ENCODE measurements at regions of chr16 and their contacts with region 1.

Region 1: DNA sequence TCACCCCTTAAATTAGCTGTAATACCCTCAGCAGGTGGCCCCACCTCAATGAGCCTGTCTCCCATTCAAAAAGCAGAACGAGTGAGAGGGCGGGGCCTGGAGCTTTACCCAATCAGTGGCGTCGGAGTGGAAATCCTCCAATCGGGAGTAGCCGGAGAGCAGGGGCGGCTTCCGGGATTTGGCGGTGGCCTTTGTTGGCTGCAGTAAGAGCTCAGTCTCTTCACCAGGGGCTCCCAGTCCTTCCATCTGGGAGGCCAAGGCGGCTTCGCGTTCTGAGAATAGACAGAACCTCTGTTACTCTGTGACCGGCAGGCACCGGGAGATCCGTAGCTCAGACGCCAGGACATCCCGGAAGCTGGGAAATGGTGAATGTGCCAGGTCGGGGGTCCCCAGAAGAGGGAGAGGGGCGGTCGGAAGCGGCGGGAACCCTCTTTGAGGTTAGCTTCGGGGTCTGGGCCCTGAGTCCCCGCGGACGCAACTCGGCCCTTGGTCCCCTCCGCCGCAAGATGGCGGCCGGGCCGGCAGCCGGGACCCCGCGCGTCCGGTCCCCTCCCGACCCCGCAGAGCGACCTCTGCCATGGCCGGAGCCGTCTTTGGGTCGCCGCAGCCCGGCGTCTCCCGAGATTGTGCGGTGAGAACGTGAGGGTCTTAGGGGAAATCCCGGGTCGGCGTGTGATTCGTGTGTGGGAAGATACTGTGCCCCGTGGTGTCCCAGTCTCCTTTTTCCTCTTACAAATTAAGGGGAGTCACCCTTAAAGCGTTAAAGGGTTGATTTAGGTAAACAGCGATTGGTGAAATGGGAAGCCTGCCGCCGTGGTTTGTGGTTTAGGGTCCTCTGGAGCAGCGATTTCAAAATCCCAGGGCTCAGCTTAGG is 160.3 kb upstream of the ZNF267 start:
- DNase-seq: peak; percentile 87
- ATAC-seq: peak; percentile 91
- H3K4me3 ChIP-seq: peak overlapping the region; percentile 89 to 93
- H3K27ac ChIP-seq: peak overlapping the region; percentile 94
- H3K4me1 ChIP-seq: peaks cover 6 to 17% of the 10 kb centered on the region in 2 experiments; a peak in 3 of 4 replicates
- H3K27me3 ChIP-seq: no peaks in the 10 kb centered on the region
- CTCF ChIP-seq: no peak
- POLR2A ChIP-seq: peak; percentile 95
- RAD21 ChIP-seq: no peak

Region 2: DNA sequence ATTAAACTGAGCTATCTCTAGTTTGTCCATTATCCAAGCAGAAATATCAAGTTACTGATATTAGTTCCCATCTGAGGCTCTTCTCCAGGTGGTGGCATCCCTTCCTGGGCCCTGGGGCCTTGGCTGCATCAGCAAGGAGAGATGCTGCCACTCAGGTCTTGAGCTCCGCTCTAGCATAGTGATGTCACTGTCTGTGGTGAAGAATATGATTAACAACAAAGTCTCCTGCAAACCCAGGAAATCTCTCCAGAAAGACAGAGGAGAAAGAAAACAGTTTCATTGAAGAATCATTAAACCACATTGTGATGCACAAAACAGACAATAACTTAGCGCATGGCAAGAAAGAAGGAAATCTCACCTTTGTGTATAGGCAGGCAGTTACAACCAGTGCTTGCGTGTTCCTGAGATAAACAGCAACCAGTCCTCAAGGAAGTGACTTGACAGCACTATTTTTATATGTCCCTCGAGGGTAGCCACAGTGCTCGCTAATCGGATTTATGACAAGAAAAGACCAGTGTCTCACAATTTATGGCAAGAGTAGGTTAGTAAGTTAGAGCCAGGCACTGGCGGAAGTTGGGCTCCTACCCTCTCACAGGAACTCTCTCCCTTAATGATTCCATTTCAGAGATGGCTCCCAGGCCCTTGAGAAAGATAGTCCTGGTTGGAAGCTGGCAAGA is 34.5 kb before region 1 on chr16:
- CTCF ChIA-PET with region 1: no interaction called
- POLR2A ChIA-PET with region 1: no interaction called
- RAD21 ChIA-PET with region 1: no interaction called
- intact Hi-C with region 1: no loop called
- DNase-seq: no peak
- ATAC-seq: no peak
- H3K4me3 ChIP-seq: no peak overlapping the region
- H3K27ac ChIP-seq: no peak overlapping the region
- H3K4me1 ChIP-seq: no peaks in the 10 kb centered on the region
- H3K27me3 ChIP-seq: no peaks in the 10 kb centered on the region
- CTCF ChIP-seq: no peak
- POLR2A ChIP-seq: no peak
- RAD21 ChIP-seq: no peak

Region 3: DNA sequence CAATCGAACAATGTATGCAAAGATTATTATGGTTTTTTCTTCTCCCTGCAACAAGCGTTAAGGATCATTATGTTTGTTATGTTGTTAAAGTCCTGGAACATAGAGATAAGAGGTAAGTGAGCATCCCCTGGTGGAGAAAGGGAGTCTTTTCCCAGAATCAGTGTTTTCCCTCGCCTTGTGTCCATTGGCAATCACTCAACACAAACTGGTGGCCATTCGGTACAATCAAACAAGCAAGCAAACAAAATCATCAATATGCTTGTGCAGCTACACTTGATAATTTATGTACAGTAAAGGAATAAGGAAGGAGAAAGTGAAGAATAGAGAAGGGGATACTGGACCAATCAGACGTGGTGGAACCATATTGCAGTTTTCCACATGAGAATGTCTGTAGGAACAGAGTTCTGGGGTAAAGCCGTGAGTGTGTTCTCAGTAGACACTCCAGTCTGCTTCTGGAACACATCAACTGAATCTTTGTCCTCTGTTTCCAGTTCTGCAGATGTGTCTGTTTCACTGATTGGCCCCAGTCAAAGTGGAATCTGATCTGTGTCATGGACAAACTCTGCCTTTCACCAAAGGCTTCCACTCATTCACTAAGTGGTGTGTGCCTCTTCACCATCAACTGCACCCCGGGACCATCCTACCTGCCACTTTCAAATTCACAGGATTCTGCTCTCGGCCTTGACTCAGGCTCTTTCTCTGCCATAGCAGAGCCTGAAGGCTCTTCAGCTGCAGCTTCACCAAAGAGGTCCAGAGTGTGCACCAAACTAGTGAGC is 16.2 kb before region 1 on chr16:
- CTCF ChIA-PET with region 1: interaction called, 6 read pairs
- POLR2A ChIA-PET with region 1: interaction called, 10 read pairs
- RAD21 ChIA-PET with region 1: no interaction called
- intact Hi-C with region 1: loop called (anchors 2 kb)
- DNase-seq: peak; percentile 43
- ATAC-seq: peak; percentile 26; the same call in 1 of the 2 replicates
- H3K4me3 ChIP-seq: no peak overlapping the region
- H3K27ac ChIP-seq: no peak overlapping the region
- H3K4me1 ChIP-seq: peaks cover 8 to 15% of the 10 kb centered on the region in 2 experiments; a peak in 3 of 4 replicates
- H3K27me3 ChIP-seq: no peaks in the 10 kb centered on the region
- CTCF ChIP-seq: peak; percentile 65 to 78 (median 71)
- POLR2A ChIP-seq: no peak
- RAD21 ChIP-seq: peak; percentile 86

Region 4: DNA sequence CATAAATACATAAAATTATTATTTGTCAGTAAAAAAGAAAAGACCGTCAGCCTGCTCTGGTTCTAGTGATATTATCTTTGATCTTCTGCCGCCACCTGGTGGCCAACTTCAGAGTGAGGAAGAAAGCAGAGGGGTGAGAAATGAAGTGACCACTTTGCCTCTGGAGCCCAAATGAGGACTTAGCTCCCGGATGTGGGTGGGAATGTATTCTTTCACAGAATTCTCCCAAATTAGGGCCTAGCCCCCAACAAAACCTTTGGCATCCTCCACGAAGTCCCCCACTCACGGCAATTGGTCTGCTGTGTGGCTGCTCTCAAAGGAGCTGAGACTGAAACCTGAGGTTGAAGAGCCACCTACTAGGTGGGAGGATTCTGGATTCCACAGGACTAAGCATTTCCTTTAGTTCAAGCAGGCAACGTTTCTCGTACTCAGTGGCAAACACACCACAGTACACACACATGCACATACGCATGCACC is 155.4 kb after region 1 on chr16:
- CTCF ChIA-PET with region 1: interaction called, 3 read pairs
- POLR2A ChIA-PET with region 1: interaction called, 15 read pairs
- RAD21 ChIA-PET with region 1: no interaction called
- intact Hi-C with region 1: loop called (anchors 5 kb)
- DNase-seq: peak; percentile 73
- ATAC-seq: peak; percentile 84
- H3K4me3 ChIP-seq: no peak overlapping the region
- H3K27ac ChIP-seq: no peak overlapping the region
- H3K4me1 ChIP-seq: peaks cover 3 to 14% of the 10 kb centered on the region in 2 experiments; a peak in 2 of 4 replicates
- H3K27me3 ChIP-seq: no peaks in the 10 kb centered on the region
- CTCF ChIP-seq: peak; percentile 64 to 74 (median 73)
- POLR2A ChIP-seq: no peak
- RAD21 ChIP-seq: peak; percentile 83

Region 5: DNA sequence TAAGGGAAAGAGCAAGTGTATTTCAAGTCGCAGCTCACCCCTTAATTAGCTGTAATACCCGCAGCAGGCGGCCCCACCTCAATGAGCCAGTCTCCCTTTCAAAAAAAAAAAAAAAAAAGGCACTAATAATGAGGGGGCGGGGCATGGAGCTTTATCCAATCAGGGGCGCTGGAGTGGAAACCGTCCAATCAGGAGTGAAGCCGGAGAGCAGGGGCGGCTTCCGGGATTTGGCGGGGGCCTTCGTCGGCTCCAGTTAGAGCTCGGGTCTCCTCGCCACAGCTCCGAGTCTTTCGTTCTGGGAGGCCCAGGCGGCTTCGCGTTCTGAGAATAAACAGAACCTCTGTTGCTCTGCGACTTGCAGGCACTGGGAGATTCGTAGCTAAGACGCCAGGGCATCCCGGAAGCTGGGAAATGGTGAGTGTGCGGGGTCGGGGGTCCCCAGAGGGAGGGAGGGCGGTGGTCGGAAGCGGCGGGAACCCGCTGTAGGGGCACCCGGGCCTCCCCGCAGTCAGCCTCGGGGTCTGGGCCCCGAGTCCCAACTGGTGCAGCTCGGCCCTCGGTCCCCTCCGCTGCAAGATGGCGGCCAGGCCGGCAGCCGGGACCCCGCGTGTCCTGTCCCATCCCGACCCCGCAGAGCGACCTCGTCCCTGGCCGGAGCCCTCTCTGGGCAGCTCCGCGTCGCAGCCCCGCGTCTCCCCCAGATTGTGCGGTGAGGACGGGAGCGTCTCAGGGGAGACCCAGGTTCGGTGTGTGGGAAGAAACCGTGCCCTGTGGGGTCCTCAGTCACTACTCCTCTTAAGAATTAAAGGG is 160.5 kb after region 1 on chr16 and contains the start of gene ZNF267:
- CTCF ChIA-PET with region 1: interaction called, 3 read pairs
- POLR2A ChIA-PET with region 1: interaction called, 15 read pairs
- RAD21 ChIA-PET with region 1: no interaction called
- intact Hi-C with region 1: loop called (anchors 5 kb)
- DNase-seq: peak; percentile 70
- ATAC-seq: peak; percentile 89
- H3K4me3 ChIP-seq: peak within 1 kb of the TSS; percentile 95 to 98
- H3K27ac ChIP-seq: peak within 1 kb of the TSS; percentile 83
- H3K4me1 ChIP-seq: peaks cover 9 to 35% of the 10 kb centered on the region in 2 experiments; a peak in 3 of 4 replicates
- H3K27me3 ChIP-seq: no peaks in the 10 kb centered on the region
- CTCF ChIP-seq: no peak
- POLR2A ChIP-seq: peak; percentile 45
- RAD21 ChIP-seq: no peak
- total RNA-seq, gene ZNF267: 15.9 TPM